B cell (primary cell): ENCODE measurements at regions of chr1 and their contacts with region 1.

Region 1: GRCh38 chr1:234499119-234499942 is 20.4 kb upstream of the TARBP1 start:
- DNase-seq: peak; percentile 86
- ATAC-seq: peak; percentile 97
- H3K4me3 ChIP-seq: peak overlapping the region in 2 of 5 experiments; percentile 2 to 27
- H3K4me3 Mint-ChIP-seq: peak overlapping the region; percentile 67
- H3K27ac ChIP-seq: no peak overlapping the region
- H3K27ac Mint-ChIP-seq: peak overlapping the region; percentile 70
- H3K4me1 ChIP-seq: peaks cover 3 to 15% of the 10 kb centered on the region in 2 donors
- H3K4me1 Mint-ChIP-seq: peaks cover 25% of the 10 kb centered on the region
- H3K27me3 ChIP-seq: no peaks in the 10 kb centered on the region
- H3K27me3 Mint-ChIP-seq: no peaks in the 10 kb centered on the region
- CTCF ChIP-seq: peak; percentile 92

Region 2: GRCh38 chr1:233859446-233859845 is 639.9 kb before region 1 on chr1:
- CTCF ChIA-PET with region 1: no interaction called
- POLR2A ChIA-PET with region 1: no interaction called
- intact Hi-C with region 1: no loop called
- DNase-seq: no peak
- ATAC-seq: no peak
- H3K4me3 ChIP-seq: no peak overlapping the region
- H3K4me3 Mint-ChIP-seq: no peak overlapping the region
- H3K27ac ChIP-seq: no peak overlapping the region
- H3K27ac Mint-ChIP-seq: no peak overlapping the region
- H3K4me1 ChIP-seq: no peaks in the 10 kb centered on the region
- H3K4me1 Mint-ChIP-seq: no peaks in the 10 kb centered on the region
- H3K27me3 ChIP-seq: no peaks in the 10 kb centered on the region
- H3K27me3 Mint-ChIP-seq: no peaks in the 10 kb centered on the region
- CTCF ChIP-seq: no peak

Region 3: GRCh38 chr1:234231061-234231892 is 268.1 kb before region 1 on chr1:
- CTCF ChIA-PET with region 1: no interaction called
- POLR2A ChIA-PET with region 1: no interaction called
- intact Hi-C with region 1: no loop called
- DNase-seq: no peak
- ATAC-seq: no peak
- H3K4me3 ChIP-seq: no peak overlapping the region
- H3K4me3 Mint-ChIP-seq: no peak overlapping the region
- H3K27ac ChIP-seq: no peak overlapping the region
- H3K27ac Mint-ChIP-seq: no peak overlapping the region
- H3K4me1 ChIP-seq: peaks cover 0 to 4% of the 10 kb centered on the region in 2 donors
- H3K4me1 Mint-ChIP-seq: no peaks in the 10 kb centered on the region
- H3K27me3 ChIP-seq: peaks cover 0 to 7% (median 2%) of the 10 kb centered on the region in 4 experiments
- H3K27me3 Mint-ChIP-seq: peaks cover 44% of the 10 kb centered on the region
- CTCF ChIP-seq: no peak

Region 4: DNA sequence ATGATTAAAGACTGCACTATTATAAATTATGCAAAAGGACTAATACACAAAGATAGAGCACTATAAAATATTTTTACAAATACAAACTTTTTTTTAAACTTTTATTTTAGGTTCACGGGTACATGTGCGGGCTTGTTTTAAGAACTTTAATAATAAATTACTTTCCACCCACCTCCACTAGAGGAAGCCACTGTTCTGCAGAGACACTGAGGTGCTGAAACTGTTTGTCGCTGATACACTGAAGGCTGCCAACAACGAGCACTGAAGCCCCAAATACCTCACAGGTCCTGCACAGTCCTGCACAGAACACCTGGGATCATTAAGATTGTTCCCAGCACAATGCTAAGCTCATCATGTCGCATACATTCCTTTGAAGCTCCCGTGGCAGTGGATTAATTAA is 106.1 kb before region 1 on chr1:
- CTCF ChIA-PET with region 1: no interaction called
- POLR2A ChIA-PET with region 1: no interaction called
- intact Hi-C with region 1: no loop called
- DNase-seq: no peak
- ATAC-seq: no peak
- H3K4me3 ChIP-seq: no peak overlapping the region
- H3K4me3 Mint-ChIP-seq: no peak overlapping the region
- H3K27ac ChIP-seq: no peak overlapping the region
- H3K27ac Mint-ChIP-seq: no peak overlapping the region
- H3K4me1 ChIP-seq: peaks cover 0 to 3% of the 10 kb centered on the region in 2 donors
- H3K4me1 Mint-ChIP-seq: peaks cover 4% of the 10 kb centered on the region
- H3K27me3 ChIP-seq: no peaks in the 10 kb centered on the region
- H3K27me3 Mint-ChIP-seq: no peaks in the 10 kb centered on the region
- CTCF ChIP-seq: no peak

Region 5: GRCh38 chr1:234486498-234487448 is 12.6 kb before region 1 on chr1:
- CTCF ChIA-PET with region 1: interaction called, 23 read pairs
- POLR2A ChIA-PET with region 1: interaction called, 4 read pairs
- intact Hi-C with region 1: no loop called
- DNase-seq: no peak
- ATAC-seq: peak; percentile 47
- H3K4me3 ChIP-seq: no peak overlapping the region
- H3K4me3 Mint-ChIP-seq: no peak overlapping the region
- H3K27ac ChIP-seq: no peak overlapping the region
- H3K27ac Mint-ChIP-seq: peak overlapping the region; percentile 15
- H3K4me1 ChIP-seq: peaks cover 18 to 24% of the 10 kb centered on the region in 2 donors
- H3K4me1 Mint-ChIP-seq: peaks cover 30% of the 10 kb centered on the region
- H3K27me3 ChIP-seq: no peaks in the 10 kb centered on the region
- H3K27me3 Mint-ChIP-seq: peaks cover 6% of the 10 kb centered on the region
- CTCF ChIP-seq: peak; percentile 28

Region 6: DNA sequence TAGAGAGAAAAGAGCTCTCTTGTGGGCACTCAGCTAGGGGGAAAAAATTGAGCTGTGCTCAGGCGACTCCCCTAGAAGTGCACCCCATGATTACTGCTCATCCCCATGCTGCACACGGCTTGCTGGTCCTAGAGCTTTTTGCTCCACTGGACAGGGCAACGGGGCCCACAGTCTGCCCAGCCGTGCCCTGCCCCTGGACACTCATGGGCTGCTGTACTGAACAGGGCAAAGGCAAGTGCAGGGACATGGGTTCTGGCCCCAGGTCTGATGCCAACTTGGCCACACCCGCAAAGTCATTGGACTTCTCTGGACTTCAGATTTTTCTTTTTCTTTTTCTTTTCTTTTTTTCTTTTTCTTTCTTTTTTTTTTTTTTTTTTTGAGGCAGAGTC is 22.5 kb after region 1 on chr1:
- CTCF ChIA-PET with region 1: interaction called, 9 read pairs
- POLR2A ChIA-PET with region 1: no interaction called
- intact Hi-C with region 1: loop called (anchors 1 kb)
- DNase-seq: no peak
- ATAC-seq: no peak
- H3K4me3 ChIP-seq: no peak overlapping the region
- H3K4me3 Mint-ChIP-seq: no peak overlapping the region
- H3K27ac ChIP-seq: no peak overlapping the region
- H3K27ac Mint-ChIP-seq: peak overlapping the region; percentile 47
- H3K4me1 ChIP-seq: peaks cover 29 to 41% of the 10 kb centered on the region in 2 donors
- H3K4me1 Mint-ChIP-seq: peaks cover 25% of the 10 kb centered on the region
- H3K27me3 ChIP-seq: no peaks in the 10 kb centered on the region
- H3K27me3 Mint-ChIP-seq: no peaks in the 10 kb centered on the region
- CTCF ChIP-seq: no peak

Region 7: DNA sequence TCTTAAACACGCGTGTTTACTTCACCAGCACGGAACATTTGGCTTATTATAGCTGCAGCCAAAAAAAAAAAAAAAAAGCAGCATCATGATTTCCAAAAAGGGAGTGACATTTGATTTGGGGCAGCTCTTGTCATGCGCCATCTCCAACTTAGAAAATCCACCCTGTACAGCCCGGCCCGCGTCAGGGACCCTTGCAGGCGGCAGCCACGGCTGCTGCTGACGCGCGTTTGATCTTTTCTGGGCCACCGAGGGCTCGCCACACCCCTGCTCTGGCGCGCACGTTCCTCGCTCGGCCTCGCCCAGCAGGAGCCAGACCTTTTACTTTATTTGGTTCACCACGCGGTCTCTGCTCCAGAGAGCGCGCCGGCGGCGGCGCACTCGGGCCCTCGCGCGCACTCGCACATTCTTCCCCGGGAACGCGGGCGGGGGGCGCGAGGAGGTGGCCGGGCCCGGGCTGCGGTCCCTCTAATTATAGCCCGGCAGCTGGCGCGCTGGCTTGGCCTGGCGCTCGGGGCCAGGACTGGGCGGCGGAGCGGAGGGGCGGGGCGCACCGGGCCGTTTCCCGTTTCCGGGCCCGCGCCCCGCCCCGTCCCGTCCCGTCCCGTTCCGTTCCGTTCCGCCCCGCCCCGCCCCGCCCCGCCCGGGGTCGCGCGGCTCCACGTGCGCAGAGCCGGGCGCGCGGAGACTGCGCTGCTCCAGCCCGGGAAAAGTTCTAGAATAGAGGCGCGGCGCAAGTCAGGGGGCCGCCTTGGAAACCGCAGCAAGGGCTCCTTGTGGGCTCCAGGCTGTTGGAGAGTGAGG is 100.5 kb after region 1 on chr1:
- CTCF ChIA-PET with region 1: interaction called, 16 read pairs
- POLR2A ChIA-PET with region 1: no interaction called
- intact Hi-C with region 1: loop called (anchors 2 kb)
- DNase-seq: peak; percentile 89
- ATAC-seq: peak; percentile 73
- H3K4me3 ChIP-seq: peak overlapping the region; percentile 56 to 84 (median 66)
- H3K4me3 Mint-ChIP-seq: peak overlapping the region; percentile 90
- H3K27ac ChIP-seq: peak overlapping the region; percentile 83 to 93
- H3K27ac Mint-ChIP-seq: peak overlapping the region; percentile 97
- H3K4me1 ChIP-seq: peaks cover 53 to 54% of the 10 kb centered on the region in 2 donors
- H3K4me1 Mint-ChIP-seq: peaks cover 54% of the 10 kb centered on the region
- H3K27me3 ChIP-seq: no peaks in the 10 kb centered on the region
- H3K27me3 Mint-ChIP-seq: no peaks in the 10 kb centered on the region
- CTCF ChIP-seq: no peak

Region 8: GRCh38 chr1:235093696-235094592 is 594.6 kb after region 1 on chr1:
- CTCF ChIA-PET with region 1: interaction called, 11 read pairs
- POLR2A ChIA-PET with region 1: interaction called, 3 read pairs
- intact Hi-C with region 1: no loop called
- DNase-seq: peak; percentile 84
- ATAC-seq: peak; percentile 99
- H3K4me3 ChIP-seq: no peak overlapping the region
- H3K4me3 Mint-ChIP-seq: no peak overlapping the region
- H3K27ac ChIP-seq: no peak overlapping the region
- H3K27ac Mint-ChIP-seq: peak overlapping the region; percentile 2
- H3K4me1 ChIP-seq: peaks cover 0 to 7% of the 10 kb centered on the region in 2 donors
- H3K4me1 Mint-ChIP-seq: peaks cover 5% of the 10 kb centered on the region
- H3K27me3 ChIP-seq: no peaks in the 10 kb centered on the region
- H3K27me3 Mint-ChIP-seq: peaks cover 5% of the 10 kb centered on the region
- CTCF ChIP-seq: peak; percentile 98